Gastrocnemius medialis (tissue), 4 donors: ENCODE measurements at regions of chr9 and their contacts with region 1.

Region 1: GRCh38 chr9:37582548-37583157 is 6.5 kb upstream of the FBXO10 start:
- DNase-seq: no peak
- ATAC-seq: peak; percentile 72 to 82
- H3K4me3 ChIP-seq: no peak overlapping the region
- H3K27ac ChIP-seq: no peak overlapping the region
- H3K4me1 ChIP-seq: no peaks in the 10 kb centered on the region
- H3K27me3 ChIP-seq: no peaks in the 10 kb centered on the region
- CTCF ChIP-seq: peak; percentile 57 to 75 (median 69)
- POLR2A ChIP-seq: no peak

Region 2: DNA sequence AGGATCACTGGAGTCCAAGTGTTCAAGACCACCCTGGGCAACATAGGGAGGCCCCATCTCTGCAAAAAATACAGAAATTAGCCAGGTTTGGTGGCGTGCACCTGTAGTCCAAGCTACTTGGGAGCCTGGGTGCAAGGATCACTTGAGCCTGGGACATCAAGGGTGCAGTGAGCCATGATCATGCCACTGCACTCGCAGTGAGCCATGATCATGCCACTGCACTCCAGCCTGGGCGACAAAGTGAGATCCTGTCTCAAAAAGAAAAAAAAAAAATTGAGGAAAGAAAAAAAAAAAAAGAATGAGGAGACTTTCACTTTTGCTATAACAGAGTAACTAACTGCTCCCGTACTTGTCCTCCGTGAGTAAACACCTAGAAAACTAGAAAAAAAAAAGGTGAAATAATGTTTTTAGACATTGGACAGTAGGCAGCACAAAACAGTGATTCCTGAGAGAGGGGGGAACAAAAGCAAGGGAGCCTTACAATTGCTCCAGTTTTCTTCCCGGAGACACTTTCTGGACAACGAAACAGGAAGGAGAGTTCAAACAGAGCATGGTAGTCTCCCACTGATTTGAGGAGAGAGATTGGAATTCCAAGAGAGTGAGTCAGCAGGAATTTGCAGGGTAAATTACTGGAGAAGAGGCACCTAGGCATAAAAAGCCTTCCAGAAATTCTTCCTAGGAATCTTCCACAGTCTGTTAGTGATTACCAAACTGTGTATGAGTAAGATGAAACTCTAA is 110.5 kb before region 1 on chr9:
- in situ Hi-C with region 1: loop called in 1 of 4 experiments (anchors 10 kb)
- intact Hi-C with region 1: loop called (anchors 5 kb)
- DNase-seq: no peak
- ATAC-seq: peak in 1 of 2 donors; percentile 68
- H3K4me3 ChIP-seq: peak overlapping the region; percentile 2 to 39 (median 30)
- H3K27ac ChIP-seq: peak overlapping the region; percentile 24 to 63 (median 54)
- H3K4me1 ChIP-seq: peaks cover 0 to under 1% of the 10 kb centered on the region in 2 donors
- H3K27me3 ChIP-seq: no peaks in the 10 kb centered on the region
- CTCF ChIP-seq: no peak
- POLR2A ChIP-seq: no peak

Region 3: DNA sequence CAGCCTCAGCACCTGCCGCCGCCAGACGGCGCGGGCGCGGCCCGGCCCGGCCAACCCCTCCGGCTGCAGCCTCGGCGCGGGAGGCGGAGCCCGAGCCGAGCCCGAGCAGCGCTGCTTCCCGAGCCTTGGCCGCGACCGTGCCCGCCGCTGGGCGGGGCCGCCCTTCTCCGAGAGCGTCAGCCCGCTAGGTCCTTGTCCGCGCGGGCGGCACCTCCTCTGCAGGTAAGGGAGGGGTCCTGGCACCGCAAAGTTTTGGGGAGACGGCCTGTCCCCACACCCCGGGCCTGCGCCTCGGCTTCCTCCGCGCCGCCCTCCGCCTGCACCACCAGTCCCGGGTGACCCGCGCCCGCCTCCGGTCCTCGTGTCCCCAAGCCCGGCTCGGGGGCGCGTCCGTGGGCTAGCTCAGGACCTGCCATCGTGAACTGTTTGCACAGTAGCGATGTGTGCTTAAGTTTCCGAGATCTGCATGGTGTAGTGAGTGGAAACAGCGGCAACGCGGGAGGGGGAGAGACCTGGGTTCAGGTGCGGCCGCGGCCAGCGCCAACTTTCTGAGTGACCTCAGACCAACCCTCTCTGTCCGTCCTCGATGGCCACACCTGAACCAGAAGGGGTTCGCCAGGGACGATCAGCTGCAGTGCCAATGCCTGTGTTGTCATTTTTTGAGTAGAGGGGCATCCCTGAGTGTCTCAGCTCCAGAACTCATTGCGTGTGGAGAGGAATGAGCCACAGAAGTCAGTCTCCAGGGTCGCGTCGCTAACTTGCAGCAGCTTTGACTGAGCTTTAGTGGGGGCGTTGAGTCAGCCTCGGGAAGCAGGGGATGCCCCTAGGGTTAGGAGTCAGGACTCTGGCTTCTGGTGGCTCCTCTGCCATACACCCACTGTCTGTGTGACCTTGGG is 68.5 kb after region 1 on chr9 and contains the start of gene FRMPD1:
- in situ Hi-C with region 1: no loop called
- intact Hi-C with region 1: loop called (anchors 5 kb)
- DNase-seq: peak in 1 of 2 donors; percentile 42
- ATAC-seq: peak; percentile 82 to 84
- H3K4me3 ChIP-seq: peak within 1 kb of the TSS; percentile 65 to 93 (median 76)
- H3K27ac ChIP-seq: peak within 1 kb of the TSS; percentile 42 to 69 (median 58)
- H3K4me1 ChIP-seq: peaks cover 10 to 12% of the 10 kb centered on the region in 2 donors
- H3K27me3 ChIP-seq: no peaks in the 10 kb centered on the region
- CTCF ChIP-seq: peak in 1 of 5 experiments; percentile 21
- POLR2A ChIP-seq: no peak
- total RNA-seq, gene FRMPD1: 0.46 to 1.7 (median 1.0) TPM

Region 4: DNA sequence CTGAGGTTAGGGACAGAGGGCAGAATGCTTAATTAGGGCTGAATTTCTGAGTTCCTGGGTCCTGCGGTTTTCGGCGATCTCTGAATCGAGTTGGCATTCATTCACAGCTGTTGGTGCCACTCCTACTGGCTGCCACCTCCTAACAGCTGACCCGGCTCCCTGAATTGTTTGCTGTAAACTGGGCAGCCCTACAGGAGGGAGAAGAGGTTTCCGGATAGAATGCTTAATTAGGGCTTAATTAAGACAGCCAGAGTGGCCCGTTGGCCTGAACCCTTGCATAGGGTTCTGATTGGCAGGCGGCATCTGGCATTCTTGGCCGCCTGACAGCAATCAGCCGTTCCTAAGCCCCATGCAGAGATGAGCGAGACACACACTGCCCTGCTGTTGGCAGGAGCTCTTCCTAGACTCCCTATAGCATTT is 93.8 kb after region 1 on chr9:
- in situ Hi-C with region 1: loop called in 1 of 4 experiments (anchors 10 kb)
- intact Hi-C with region 1: no loop called
- DNase-seq: peak; percentile 52 to 54
- ATAC-seq: peak; percentile 84 to 85
- H3K4me3 ChIP-seq: peak overlapping the region; percentile 27 to 49 (median 42)
- H3K27ac ChIP-seq: peak overlapping the region; percentile 69 to 81 (median 74)
- H3K4me1 ChIP-seq: peaks cover 25 to 32% of the 10 kb centered on the region in 2 donors
- H3K27me3 ChIP-seq: no peaks in the 10 kb centered on the region
- CTCF ChIP-seq: no peak
- POLR2A ChIP-seq: no peak

Region 5: GRCh38 chr9:37753489-37754190 is 171.0 kb after region 1 on chr9 and contains the start of gene TRMT10B:
- in situ Hi-C with region 1: no loop called
- intact Hi-C with region 1: loop called (anchors 5 kb)
- DNase-seq: peak; percentile 42 to 61
- ATAC-seq: peak; percentile 92 to 93
- H3K4me3 ChIP-seq: peak within 1 kb of the TSS; percentile 75 to 98 (median 88)
- H3K27ac ChIP-seq: peak within 1 kb of the TSS; percentile 79 to 88 (median 84)
- H3K4me1 ChIP-seq: peaks cover 3 to 14% of the 10 kb centered on the region in 2 donors
- H3K27me3 ChIP-seq: no peaks in the 10 kb centered on the region
- CTCF ChIP-seq: peak in 1 of 5 experiments; percentile 25
- POLR2A ChIP-seq: peak in 1 of 2 donors; percentile 32
- total RNA-seq, gene TRMT10B: 1.5 to 10.2 (median 3.0) TPM

Region 6: DNA sequence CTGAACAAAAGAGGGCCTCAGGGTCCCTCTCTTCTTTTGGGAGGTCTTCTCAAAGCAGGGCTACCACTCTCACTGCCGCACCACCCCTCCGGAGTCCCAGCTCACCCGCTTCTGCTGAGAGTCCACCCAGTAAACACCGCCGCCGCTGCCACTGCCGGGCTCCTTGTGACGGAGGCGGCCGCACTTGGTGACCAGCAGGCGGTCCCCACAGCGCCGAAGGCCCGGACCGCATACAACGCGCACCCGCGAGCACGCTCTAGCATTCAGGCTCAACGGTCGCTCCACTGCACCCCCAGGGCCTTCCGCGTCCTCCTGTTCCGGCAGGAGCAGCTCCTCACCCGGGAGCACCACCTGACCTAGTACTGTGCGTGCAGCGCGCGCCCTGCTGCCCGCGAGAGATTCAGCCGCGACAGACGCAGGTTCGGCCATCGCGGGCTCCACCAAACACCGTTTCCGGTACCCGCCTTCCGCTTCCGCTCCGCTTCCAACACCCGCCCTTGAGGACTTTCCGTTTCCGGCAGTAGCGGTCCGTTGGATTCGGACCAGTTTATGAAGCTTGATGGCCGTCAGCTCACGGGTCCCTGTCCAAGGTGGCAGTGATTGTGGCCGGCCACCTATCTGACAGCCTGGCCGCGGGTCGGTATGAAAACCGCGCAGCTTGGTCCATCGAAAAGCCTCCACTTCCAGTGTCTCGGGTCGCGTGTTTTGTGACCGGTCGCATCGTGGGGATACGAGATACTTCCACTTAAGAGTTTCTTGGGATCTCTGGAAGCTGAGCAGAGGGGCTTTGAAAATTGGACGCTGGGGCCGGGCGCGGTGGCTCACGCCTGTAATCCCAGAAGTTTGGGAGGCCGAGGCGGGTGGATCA is 202.2 kb after region 1 on chr9 and contains the start of gene EXOSC3:
- in situ Hi-C with region 1: loop called (anchors 10 to 25 kb)
- intact Hi-C with region 1: loop called (anchors 10 kb)
- DNase-seq: peak; percentile 84 to 85
- ATAC-seq: peak; percentile 99
- H3K4me3 ChIP-seq: peak within 1 kb of the TSS; percentile 87 to 95 (median 94)
- H3K27ac ChIP-seq: peak within 1 kb of the TSS; percentile 77 to 89 (median 81)
- H3K4me1 ChIP-seq: peaks cover 15% of the 10 kb centered on the region in 2 donors
- H3K27me3 ChIP-seq: peaks cover 0 to 11% (median 0%) of the 10 kb centered on the region in 3 donors
- CTCF ChIP-seq: peak in 1 of 5 experiments; percentile 15
- POLR2A ChIP-seq: peak; percentile 13 to 63
- total RNA-seq, gene EXOSC3: 15.6 to 46.7 (median 17.8) TPM